Activated CD4-positive, alpha-beta memory T cell treated with anti-CD3 and anti-CD28 coated beads for 36 hours (primary cell): ENCODE measurements at regions of chr16 and their contacts with region 1.

Region 1: GRCh38 chr16:53457670-53458069 is 23.4 kb downstream of the RBL2 start:
- DNase-seq: peak; percentile 81
- H3K4me3 Mint-ChIP-seq: peak overlapping the region; percentile 56
- H3K27ac Mint-ChIP-seq: peak overlapping the region; percentile 87
- H3K4me1 Mint-ChIP-seq: peaks cover 84% of the 10 kb centered on the region
- H3K27me3 Mint-ChIP-seq: no peaks in the 10 kb centered on the region

Region 2: DNA sequence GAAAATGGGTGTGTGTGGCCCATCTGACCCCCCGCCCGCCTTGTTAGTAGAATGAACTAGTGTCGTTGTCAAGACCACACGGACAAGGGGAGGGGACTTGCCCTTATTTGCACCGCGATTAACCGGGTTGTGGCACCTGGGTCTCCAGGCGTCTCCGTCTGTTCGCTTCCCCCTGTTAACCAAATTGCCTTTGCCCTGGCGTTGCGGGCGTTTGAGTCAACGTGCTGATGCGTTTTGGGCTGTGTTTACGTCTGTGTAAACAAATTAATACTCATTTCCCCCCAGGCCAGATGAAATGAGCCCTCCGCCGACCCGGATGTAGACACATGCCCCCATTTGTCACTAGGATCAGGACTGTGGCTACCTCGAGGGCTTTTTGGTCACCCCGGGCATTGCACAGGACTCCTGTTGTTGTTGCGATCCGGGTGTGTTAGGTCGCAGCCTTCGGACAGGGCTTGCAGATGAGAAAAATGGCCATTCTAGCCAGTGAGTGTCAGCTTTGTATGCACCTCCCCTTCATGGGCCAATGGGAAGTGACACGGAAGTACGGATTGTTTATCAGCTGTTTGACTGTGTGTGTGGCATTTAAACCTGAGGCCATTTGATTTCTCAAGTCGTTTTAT is 22.5 kb before region 1 on chr16:
- CTCF ChIA-PET with region 1: no interaction called
- POLR2A ChIA-PET with region 1: interaction called, 4 read pairs
- intact Hi-C with region 1: loop called (anchors 1 kb)
- DNase-seq: peak; percentile 70
- H3K4me3 Mint-ChIP-seq: peak overlapping the region; percentile 90
- H3K27ac Mint-ChIP-seq: peak overlapping the region; percentile 92
- H3K4me1 Mint-ChIP-seq: peaks cover 44% of the 10 kb centered on the region
- H3K27me3 Mint-ChIP-seq: no peaks in the 10 kb centered on the region

Region 3: GRCh38 chr16:53518550-53519416 is 61.1 kb after region 1 on chr16:
- CTCF ChIA-PET with region 1: no interaction called
- POLR2A ChIA-PET with region 1: no interaction called
- intact Hi-C with region 1: loop called (anchors 1 kb)
- DNase-seq: peak; percentile 92
- H3K4me3 Mint-ChIP-seq: peak overlapping the region; percentile 73
- H3K27ac Mint-ChIP-seq: peak overlapping the region; percentile 84
- H3K4me1 Mint-ChIP-seq: peaks cover 46% of the 10 kb centered on the region
- H3K27me3 Mint-ChIP-seq: no peaks in the 10 kb centered on the region

Region 4: DNA sequence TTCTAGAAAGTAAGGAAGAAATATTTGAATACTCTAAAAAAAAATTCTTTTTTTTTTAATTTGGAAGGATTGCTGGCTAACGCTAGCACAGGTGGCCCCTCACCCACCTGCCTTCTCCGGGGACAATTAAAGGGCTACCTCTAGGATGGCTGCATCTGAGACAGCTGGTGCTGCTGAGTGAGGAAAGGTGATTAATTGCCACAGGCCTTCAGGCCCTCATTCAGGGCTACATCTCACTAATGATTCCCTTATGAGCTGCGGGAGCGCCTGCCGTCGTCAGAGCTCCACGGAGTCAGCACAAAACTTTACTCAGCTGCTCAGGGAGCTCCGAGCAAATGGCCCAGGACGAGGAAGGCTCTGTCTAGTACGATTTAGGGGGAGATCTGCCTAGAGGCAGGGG is 72.4 kb after region 1 on chr16:
- CTCF ChIA-PET with region 1: no interaction called
- POLR2A ChIA-PET with region 1: no interaction called
- intact Hi-C with region 1: loop called (anchors 1 kb)
- DNase-seq: no peak
- H3K4me3 Mint-ChIP-seq: no peak overlapping the region
- H3K27ac Mint-ChIP-seq: no peak overlapping the region
- H3K4me1 Mint-ChIP-seq: peaks cover 10% of the 10 kb centered on the region
- H3K27me3 Mint-ChIP-seq: no peaks in the 10 kb centered on the region